Gastrocnemius medialis (tissue), 4 donors: ENCODE measurements at regions of chr12 and their contacts with region 1.

Region 1: GRCh38 chr12:45728630-45729232 is 775 bp upstream of the ARID2 start:
- DNase-seq: peak; percentile 88 to 94
- ATAC-seq: peak; percentile 55 to 58
- H3K4me3 ChIP-seq: peak overlapping the region; percentile 81 to 91 (median 84)
- H3K27ac ChIP-seq: peak overlapping the region; percentile 98 to 100 (median 98)
- H3K4me1 ChIP-seq: peaks cover 46 to 47% of the 10 kb centered on the region in 2 donors
- H3K27me3 ChIP-seq: no peaks in the 10 kb centered on the region
- CTCF ChIP-seq: peak; percentile 91 to 99 (median 98)
- POLR2A ChIP-seq: peak; percentile 81 to 89

Region 2: GRCh38 chr12:45409966-45410365 is 318.8 kb before region 1 on chr12:
- in situ Hi-C with region 1: no loop called
- intact Hi-C with region 1: loop called (anchors 5 kb)
- DNase-seq: peak; percentile 42 to 68
- ATAC-seq: peak; percentile 71 to 78
- H3K4me3 ChIP-seq: no peak overlapping the region
- H3K27ac ChIP-seq: peak overlapping the region; percentile 75 to 84 (median 82)
- H3K4me1 ChIP-seq: peaks cover 32 to 36% of the 10 kb centered on the region in 2 donors
- H3K27me3 ChIP-seq: no peaks in the 10 kb centered on the region
- CTCF ChIP-seq: no peak
- POLR2A ChIP-seq: no peak

Region 3: GRCh38 chr12:45648070-45648469 is 80.7 kb before region 1 on chr12:
- in situ Hi-C with region 1: no loop called
- intact Hi-C with region 1: loop called (anchors 2 kb)
- DNase-seq: peak; percentile 64 to 84
- ATAC-seq: peak; percentile 100
- H3K4me3 ChIP-seq: no peak overlapping the region
- H3K27ac ChIP-seq: peak overlapping the region; percentile 7 to 44 (median 32)
- H3K4me1 ChIP-seq: peaks cover 9 to 18% of the 10 kb centered on the region in 2 donors
- H3K27me3 ChIP-seq: no peaks in the 10 kb centered on the region
- CTCF ChIP-seq: no peak
- POLR2A ChIP-seq: no peak

Region 4: DNA sequence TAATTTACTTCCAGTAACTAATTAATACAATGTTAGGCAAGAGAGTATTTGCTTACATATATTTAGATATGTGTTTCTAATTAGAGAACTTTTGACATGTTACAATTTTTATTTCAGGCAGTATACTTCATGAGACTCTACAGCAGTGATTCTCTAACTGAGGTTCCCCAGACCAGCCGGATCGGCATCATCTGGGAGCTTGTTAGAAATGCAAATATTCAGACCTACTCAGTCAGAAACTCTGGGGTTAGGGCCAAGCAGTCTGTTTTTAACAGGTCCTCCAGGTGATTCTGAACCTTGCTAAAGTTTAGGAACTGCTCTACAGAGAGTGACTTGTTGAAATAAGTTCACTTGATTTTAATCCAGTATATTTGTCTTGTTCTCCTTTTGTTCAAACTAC is 47.2 kb after region 1 on chr12:
- in situ Hi-C with region 1: no loop called
- intact Hi-C with region 1: loop called (anchors 2 kb)
- DNase-seq: no peak
- ATAC-seq: no peak
- H3K4me3 ChIP-seq: no peak overlapping the region
- H3K27ac ChIP-seq: peak overlapping the region; percentile 77 to 83 (median 78)
- H3K4me1 ChIP-seq: peaks cover 55 to 57% of the 10 kb centered on the region in 2 donors
- H3K27me3 ChIP-seq: no peaks in the 10 kb centered on the region
- CTCF ChIP-seq: no peak
- POLR2A ChIP-seq: no peak

Region 5: GRCh38 chr12:46049665-46050064 is 320.9 kb after region 1 on chr12:
- in situ Hi-C with region 1: no loop called
- intact Hi-C with region 1: no loop called
- DNase-seq: no peak
- ATAC-seq: no peak
- H3K4me3 ChIP-seq: no peak overlapping the region
- H3K27ac ChIP-seq: no peak overlapping the region
- H3K4me1 ChIP-seq: no peaks in the 10 kb centered on the region
- H3K27me3 ChIP-seq: no peaks in the 10 kb centered on the region
- CTCF ChIP-seq: no peak
- POLR2A ChIP-seq: no peak